ENCODE measurements at regions of chr14 and their contacts with region 1.

Region 1: DNA sequence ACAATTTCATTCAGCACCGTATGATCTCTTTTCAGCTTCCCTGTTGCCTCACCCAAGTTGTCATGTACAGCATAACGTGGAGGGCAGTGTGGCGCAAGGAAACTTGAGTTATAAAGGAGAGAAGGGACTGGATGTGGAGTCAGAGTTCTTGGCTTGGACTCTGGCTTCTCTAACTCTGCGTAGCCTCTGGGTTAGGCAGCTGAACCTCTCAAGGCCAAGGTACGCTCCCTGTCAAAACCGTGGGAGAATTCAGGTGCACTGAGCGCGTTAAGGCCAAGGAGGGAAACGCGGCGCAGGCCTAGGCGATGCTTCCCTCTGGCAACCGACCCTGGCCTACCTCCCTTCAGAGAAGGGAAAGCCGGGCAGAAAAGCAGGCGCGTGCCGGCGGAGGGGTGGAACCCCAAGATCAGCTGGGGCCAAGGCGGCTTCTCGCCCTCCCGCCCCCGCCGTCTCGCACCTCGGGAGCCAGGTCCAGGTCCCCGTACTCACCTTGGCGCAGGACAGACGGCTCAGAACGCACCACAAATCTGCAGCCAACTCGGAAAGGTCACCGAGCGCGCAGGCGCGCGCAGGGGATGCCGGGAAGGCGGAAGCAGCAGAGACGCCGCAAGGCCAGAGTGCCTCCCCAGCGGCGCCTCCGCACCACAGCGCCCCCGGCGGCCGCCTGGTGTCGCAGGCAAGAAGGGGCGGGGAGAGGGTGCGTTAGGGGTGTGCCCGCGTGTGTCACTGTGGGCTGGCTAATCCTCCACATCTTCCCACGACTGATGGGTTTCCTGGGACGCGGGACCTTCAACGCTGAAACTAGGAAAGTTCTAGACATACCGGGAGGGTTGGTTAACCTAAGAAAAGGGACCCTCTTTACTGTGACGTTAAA is 7.0 kb upstream of the TDRD9 start:
- DNase-seq: peak; percentile 91
- H3K4me3 Mint-ChIP-seq: peak overlapping the region; percentile 91
- H3K27ac Mint-ChIP-seq: peak overlapping the region; percentile 91
- H3K4me1 Mint-ChIP-seq: no peaks in the 10 kb centered on the region
- H3K27me3 Mint-ChIP-seq: peaks cover 10% of the 10 kb centered on the region
- CTCF ChIP-seq: peak; percentile 97

Region 2: DNA sequence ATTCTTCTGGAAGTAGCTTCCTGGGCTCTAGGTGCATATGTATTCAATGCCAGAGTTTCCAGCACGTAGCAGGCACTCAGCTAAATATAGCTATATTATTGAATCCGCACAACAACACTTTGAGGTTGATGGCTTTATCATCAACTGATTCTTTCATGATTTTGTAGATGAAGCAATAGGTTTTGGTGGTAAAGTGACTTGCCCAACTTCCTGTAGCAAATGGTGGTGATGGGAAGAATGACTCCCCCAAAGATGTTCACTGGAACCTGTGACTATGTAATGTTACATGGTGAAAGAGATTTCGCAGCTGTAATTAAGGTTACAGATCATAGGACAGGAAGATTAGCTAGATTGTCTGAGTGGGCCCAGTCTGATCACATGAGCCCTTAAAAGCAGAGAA is 10.2 kb after region 1 on chr14:
- CTCF ChIA-PET with region 1: interaction called, 12 read pairs
- POLR2A ChIA-PET with region 1: interaction called, 39 read pairs
- intact Hi-C with region 1: no loop called
- DNase-seq: no peak
- H3K4me3 Mint-ChIP-seq: no peak overlapping the region
- H3K27ac Mint-ChIP-seq: no peak overlapping the region
- H3K4me1 Mint-ChIP-seq: peaks cover 23% of the 10 kb centered on the region
- H3K27me3 Mint-ChIP-seq: no peaks in the 10 kb centered on the region
- CTCF ChIP-seq: no peak

Region 3: DNA sequence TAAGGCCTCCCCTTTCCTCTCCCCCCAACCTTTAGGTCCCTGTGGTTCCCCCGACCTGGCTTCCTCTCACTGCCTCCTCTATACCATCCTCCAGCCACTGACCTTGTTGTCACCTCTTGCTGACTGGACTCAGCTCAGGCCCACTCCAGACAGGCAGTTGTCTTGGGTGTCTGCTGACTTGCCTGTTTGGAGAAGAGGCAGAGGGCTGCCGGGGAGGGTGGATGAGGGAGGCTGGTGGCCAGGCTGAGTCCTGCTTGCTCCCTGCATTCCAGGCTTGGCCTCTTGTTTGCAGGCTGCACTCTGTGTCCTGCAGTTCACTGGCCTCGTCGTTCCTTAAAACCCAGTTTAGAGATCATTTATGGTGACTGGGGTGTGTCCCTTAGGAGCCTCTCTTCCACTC is 52.1 kb after region 1 on chr14:
- CTCF ChIA-PET with region 1: interaction called, 3 read pairs
- POLR2A ChIA-PET with region 1: interaction called, 3 read pairs
- intact Hi-C with region 1: loop called (anchors 5 kb)
- DNase-seq: no peak
- H3K4me3 Mint-ChIP-seq: no peak overlapping the region
- H3K27ac Mint-ChIP-seq: no peak overlapping the region
- H3K4me1 Mint-ChIP-seq: no peaks in the 10 kb centered on the region
- H3K27me3 Mint-ChIP-seq: no peaks in the 10 kb centered on the region
- CTCF ChIP-seq: no peak

Region 4: DNA sequence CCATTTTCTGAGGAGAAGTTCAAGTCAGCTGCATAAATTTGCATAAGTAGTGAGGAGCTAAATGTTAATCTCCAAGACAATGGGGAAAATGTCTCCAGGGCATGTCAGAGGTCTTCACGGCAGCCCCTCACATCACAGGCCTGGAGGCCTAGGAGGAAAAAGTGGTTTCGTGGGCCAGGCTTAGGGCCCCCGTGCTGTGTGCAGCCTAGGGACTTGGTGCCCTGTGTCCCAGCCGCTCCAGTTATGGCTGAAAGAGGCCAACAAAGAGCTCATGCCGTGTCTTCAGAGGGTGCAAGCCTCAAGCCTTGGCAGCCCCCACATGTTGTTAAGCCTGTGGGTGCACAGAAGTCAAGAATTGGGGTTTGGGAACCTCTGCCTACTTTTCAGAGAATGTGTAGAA is 63.0 kb after region 1 on chr14:
- CTCF ChIA-PET with region 1: interaction called, 16 read pairs
- POLR2A ChIA-PET with region 1: interaction called, 3 read pairs
- intact Hi-C with region 1: loop called (anchors 5 kb)
- DNase-seq: no peak
- H3K4me3 Mint-ChIP-seq: no peak overlapping the region
- H3K27ac Mint-ChIP-seq: no peak overlapping the region
- H3K4me1 Mint-ChIP-seq: no peaks in the 10 kb centered on the region
- H3K27me3 Mint-ChIP-seq: peaks cover 14% of the 10 kb centered on the region
- CTCF ChIP-seq: no peak

Measured in MCF 10A (cell line).